Sigmoid colon (tissue), 7 donors: ENCODE measurements at regions of chr19 and their contacts with region 1.

Region 1: GRCh38 chr19:21835810-21836444 is at the start of gene ZNF43:
- DNase-seq: peak; percentile 99
- H3K4me3 ChIP-seq: peak within 1 kb of the TSS; percentile 63 to 83 (median 72)
- H3K27ac ChIP-seq: peak within 1 kb of the TSS; percentile 90 to 96 (median 93)
- H3K4me1 ChIP-seq: peaks cover 0 to 8% (median 6%) of the 10 kb centered on the region in 4 donors
- H3K27me3 ChIP-seq: no peaks in the 10 kb centered on the region
- CTCF ChIP-seq: no peak
- EP300 ChIP-seq: no peak
- POLR2A ChIP-seq: peak; percentile 81 to 89
- total RNA-seq, gene ZNF43: 10.0 to 16.3 (median 12.6) TPM

Region 2: DNA sequence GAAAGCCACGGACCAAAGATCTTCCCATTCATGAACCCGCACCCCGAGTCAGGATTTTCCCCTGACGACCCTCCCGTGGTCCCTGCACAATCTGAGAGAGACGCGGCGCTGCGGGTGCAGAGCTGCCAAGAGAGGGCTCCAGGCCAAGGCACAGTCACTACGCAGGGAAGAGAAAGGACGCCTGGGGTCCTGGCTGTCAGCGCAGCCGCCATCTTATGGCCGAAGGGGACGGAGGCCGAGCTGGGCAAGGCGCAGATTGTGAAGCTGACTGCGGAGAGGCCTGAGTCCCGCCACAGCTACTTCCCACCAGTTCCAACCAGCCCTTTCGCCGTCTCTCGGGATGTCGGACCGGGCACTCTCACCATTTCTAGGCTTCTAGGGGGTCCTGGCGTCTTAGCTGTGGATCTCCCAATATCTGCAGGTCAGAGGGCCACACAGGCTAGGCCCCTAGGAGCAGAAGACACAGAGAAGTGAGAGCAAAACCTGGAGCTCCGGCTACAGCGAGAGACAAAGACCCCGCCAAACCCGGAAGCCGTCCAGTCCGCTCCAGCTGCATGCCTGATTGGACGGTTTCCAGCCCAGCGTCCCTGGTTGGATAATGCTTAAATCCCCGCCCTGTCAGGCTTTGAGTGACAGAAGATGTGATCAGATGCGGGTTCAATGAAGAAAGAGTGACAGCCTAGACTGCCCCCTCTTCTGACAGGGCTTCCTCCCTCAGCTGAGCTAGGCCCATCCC is 68.7 kb before region 1 on chr19 and contains the start of gene ZNF100:
- intact Hi-C with region 1: loop called (anchors 5 kb)
- DNase-seq: peak; percentile 96
- H3K4me3 ChIP-seq: peak within 1 kb of the TSS; percentile 51 to 81 (median 66)
- H3K27ac ChIP-seq: peak within 1 kb of the TSS; percentile 77 to 92 (median 87)
- H3K4me1 ChIP-seq: peaks cover 0 to 13% (median 7%) of the 10 kb centered on the region in 4 donors
- H3K27me3 ChIP-seq: no peaks in the 10 kb centered on the region
- CTCF ChIP-seq: no peak
- EP300 ChIP-seq: no peak
- POLR2A ChIP-seq: peak; percentile 18 to 27
- total RNA-seq, gene ZNF100: 3.8 to 8.4 (median 6.9) TPM

Region 3: GRCh38 chr19:21851596-21852345 is 15.8 kb after region 1 on chr19:
- intact Hi-C with region 1: loop called (anchors 2 kb)
- DNase-seq: peak; percentile 98
- H3K4me3 ChIP-seq: peak overlapping the region; percentile 63 to 81 (median 68)
- H3K27ac ChIP-seq: peak overlapping the region; percentile 80 to 87 (median 85)
- H3K4me1 ChIP-seq: peaks cover 0 to 15% (median 11%) of the 10 kb centered on the region in 4 donors
- H3K27me3 ChIP-seq: no peaks in the 10 kb centered on the region
- CTCF ChIP-seq: no peak
- EP300 ChIP-seq: no peak
- POLR2A ChIP-seq: no peak

Region 4: GRCh38 chr19:21921691-21922180 is 85.8 kb after region 1 on chr19:
- intact Hi-C with region 1: no loop called
- DNase-seq: no peak
- H3K4me3 ChIP-seq: no peak overlapping the region
- H3K27ac ChIP-seq: no peak overlapping the region
- H3K4me1 ChIP-seq: no peaks in the 10 kb centered on the region
- H3K27me3 ChIP-seq: no peaks in the 10 kb centered on the region
- CTCF ChIP-seq: no peak
- EP300 ChIP-seq: no peak
- POLR2A ChIP-seq: no peak

Region 5: DNA sequence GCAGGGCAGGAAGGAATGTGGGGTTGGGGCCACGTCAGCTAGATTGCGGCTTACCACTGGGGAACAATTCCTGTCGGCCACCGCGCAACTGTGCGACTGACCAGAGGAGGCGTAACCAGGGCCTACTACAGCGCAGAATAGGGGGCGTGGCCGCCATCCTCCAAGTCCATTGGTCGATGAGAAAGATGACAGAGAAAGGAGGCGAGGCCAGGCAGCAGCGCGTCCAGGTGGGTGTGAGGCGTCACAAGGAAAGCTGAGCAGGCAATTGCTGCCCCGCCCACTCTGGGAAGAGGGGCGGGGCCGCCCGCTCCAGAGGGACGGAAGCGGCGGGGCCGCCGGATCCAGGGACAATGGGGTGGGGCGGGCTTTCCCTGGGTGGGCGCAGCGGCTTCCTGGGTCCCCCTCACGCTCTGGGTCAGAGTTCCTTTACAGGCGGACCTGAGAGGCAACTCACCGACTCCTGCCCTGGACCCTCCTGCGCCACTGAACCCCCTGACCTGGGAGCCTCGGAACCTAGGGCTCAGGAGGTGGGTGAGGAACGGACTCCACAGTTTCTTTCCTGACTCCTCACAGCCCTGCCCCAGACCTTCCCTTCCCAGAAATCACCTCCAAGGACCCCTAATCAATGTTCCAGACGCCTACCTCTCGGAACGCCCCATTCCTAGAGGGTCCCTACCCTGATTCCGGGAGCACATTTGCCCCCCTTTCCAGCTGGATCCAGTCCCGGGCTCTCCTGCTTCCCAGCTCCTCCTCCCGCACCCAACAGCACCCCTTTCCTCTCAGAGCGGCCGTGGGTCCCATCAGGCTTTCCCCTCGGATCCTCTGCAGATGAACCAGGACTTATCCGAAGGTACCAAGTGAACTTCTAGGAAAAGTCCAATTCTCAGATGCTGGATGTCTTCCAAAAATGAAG is 696.7 kb after region 1 on chr19:
- intact Hi-C with region 1: loop called (anchors 10 kb)
- DNase-seq: peak; percentile 97
- H3K4me3 ChIP-seq: peak overlapping the region; percentile 42 to 59 (median 48)
- H3K27ac ChIP-seq: peak overlapping the region; percentile 14 to 77 (median 62)
- H3K4me1 ChIP-seq: peaks cover 0 to 16% (median 0%) of the 10 kb centered on the region in 4 donors
- H3K27me3 ChIP-seq: peaks cover 0 to 8% (median 0%) of the 10 kb centered on the region in 3 donors
- CTCF ChIP-seq: peak in 1 of 4 experiments; percentile 31
- EP300 ChIP-seq: no peak
- POLR2A ChIP-seq: peak; percentile 29 to 68